Naive thymus-derived CD4-positive, alpha-beta T cell (primary cell): ENCODE measurements at regions of chr6 and their contacts with region 1.

Region 1: DNA sequence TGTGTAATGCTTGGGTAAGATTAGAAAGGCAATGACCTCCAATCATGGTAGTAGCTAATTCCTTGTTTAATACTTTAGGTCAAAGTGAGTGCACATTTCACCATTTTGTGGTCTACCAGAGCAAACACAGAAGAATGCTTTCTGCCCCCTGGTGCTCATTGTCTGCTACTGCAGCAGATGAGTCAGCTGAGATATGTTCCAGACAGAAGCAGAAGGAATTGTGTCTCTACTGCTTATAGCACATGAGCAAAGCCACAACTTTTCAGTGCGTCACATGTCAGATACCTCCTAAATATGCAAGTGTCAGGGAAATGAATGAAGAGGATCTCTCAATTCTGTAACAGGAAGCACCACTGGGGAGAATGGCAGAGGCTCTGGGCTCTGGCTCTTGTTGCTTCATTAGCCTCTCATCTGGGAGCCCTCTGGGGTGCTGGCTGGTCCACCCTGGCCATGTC is 308.9 kb downstream of the ALDH8A1 start:
- DNase-seq: peak; percentile 33 to 82 (median 74)
- ATAC-seq: peak; percentile 97
- H3K4me3 ChIP-seq: no peak overlapping the region
- H3K4me3 Mint-ChIP-seq: peak overlapping the region in 1 of 10 donors; percentile 12
- H3K27ac ChIP-seq: no peak overlapping the region
- H3K27ac Mint-ChIP-seq: peak overlapping the region in 4 of 9 donors; percentile 5 to 44 (median 29)
- H3K4me1 ChIP-seq: peaks cover 0 to 7% of the 10 kb centered on the region in 2 donors
- H3K4me1 Mint-ChIP-seq: peaks cover 1 to 34% (median 27%) of the 10 kb centered on the region in 7 donors
- H3K27me3 ChIP-seq: no peaks in the 10 kb centered on the region
- H3K27me3 Mint-ChIP-seq: peaks cover 0 to 3% (median 0%) of the 10 kb centered on the region in 5 donors

Region 2: DNA sequence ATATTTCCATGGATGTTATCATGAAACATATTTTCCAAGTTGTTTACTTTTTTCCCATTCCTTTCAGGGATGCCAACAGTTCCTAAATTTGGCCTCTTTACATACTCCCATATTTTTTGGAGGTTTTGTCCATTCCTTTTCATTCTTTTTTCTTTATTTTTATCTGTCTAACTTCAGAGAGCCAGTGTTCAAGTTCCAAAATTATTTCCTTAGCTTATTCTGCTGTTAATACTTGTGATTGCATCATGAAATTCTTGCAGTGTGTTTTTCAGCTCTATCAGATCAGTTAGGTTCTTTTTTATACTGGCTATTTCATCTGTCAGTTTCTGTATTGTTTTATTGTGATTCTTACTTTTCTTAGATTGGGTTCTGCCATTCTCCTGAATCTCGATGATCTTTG is 842.0 kb before region 1 on chr6:
- CTCF ChIA-PET with region 1: no interaction called
- POLR2A ChIA-PET with region 1: no interaction called
- intact Hi-C with region 1: no loop called
- DNase-seq: no peak
- ATAC-seq: no peak
- H3K4me3 ChIP-seq: no peak overlapping the region
- H3K4me3 Mint-ChIP-seq: no peak overlapping the region
- H3K27ac ChIP-seq: no peak overlapping the region
- H3K27ac Mint-ChIP-seq: no peak overlapping the region
- H3K4me1 ChIP-seq: no peaks in the 10 kb centered on the region
- H3K4me1 Mint-ChIP-seq: no peaks in the 10 kb centered on the region
- H3K27me3 ChIP-seq: no peaks in the 10 kb centered on the region
- H3K27me3 Mint-ChIP-seq: peaks cover 2 to 44% (median 18%) of the 10 kb centered on the region in 5 donors

Region 3: DNA sequence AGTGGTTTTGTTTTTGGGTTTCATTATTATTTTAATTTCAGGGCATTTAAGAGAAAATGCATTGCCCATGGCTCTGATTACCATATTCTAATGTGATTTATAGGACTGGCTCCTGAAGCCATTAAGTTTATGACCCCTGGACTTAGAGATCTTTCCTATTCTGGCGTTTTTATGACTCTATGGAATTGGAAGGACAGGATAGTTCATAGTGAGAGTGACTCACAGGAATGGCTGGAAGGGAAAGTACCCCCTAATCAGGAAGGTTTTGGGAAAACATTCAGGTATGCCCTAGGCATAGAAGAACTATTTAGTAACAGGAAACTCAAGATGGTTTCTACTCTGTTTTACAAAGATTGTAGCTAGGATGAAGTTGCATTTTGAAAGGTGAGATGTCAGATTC is 480.0 kb before region 1 on chr6:
- CTCF ChIA-PET with region 1: interaction called, 10 read pairs
- POLR2A ChIA-PET with region 1: no interaction called
- intact Hi-C with region 1: no loop called
- DNase-seq: no peak
- ATAC-seq: no peak
- H3K4me3 ChIP-seq: no peak overlapping the region
- H3K4me3 Mint-ChIP-seq: no peak overlapping the region
- H3K27ac ChIP-seq: no peak overlapping the region
- H3K27ac Mint-ChIP-seq: no peak overlapping the region
- H3K4me1 ChIP-seq: no peaks in the 10 kb centered on the region
- H3K4me1 Mint-ChIP-seq: no peaks in the 10 kb centered on the region
- H3K27me3 ChIP-seq: no peaks in the 10 kb centered on the region
- H3K27me3 Mint-ChIP-seq: peaks cover 0 to 3% (median 0%) of the 10 kb centered on the region in 5 donors

Region 4: DNA sequence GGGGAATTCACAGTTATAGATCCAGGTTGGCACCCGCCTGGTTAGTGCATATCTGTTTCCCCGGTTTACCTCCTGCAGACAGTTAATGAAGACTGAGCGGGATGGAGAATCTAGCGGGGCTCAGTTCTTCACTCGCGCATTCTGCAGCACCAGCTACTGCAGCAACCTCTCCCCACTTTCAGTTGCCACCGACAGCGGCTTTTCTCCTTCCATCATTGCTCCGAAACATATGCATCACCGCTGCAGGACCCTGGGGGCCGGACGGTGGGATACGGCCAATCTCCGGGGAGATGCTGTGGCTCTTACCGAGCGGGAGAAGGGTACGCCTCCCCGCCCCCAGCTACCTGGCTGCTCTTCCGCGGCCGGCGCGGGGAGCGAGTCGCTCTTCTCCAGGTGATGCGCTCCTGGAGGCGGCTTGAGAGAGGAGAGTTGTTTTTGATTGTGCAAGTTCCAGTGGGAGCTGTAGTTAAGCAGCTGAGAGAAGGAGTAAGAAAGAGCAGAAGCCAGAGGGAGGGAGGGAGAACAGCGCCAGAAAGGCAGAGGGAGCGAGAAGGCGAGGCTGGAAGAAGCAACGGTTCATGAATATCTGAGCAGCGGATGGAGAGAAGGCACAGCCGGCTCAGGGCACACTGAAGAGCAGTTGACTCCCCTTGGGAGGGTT is 323.4 kb before region 1 on chr6 and contains the start of gene SGK1:
- CTCF ChIA-PET with region 1: interaction called, 5 read pairs
- POLR2A ChIA-PET with region 1: no interaction called
- intact Hi-C with region 1: loop called (anchors 2 to 10 kb)
- DNase-seq: peak; percentile 6 to 40 (median 32)
- ATAC-seq: peak; percentile 77
- H3K4me3 ChIP-seq: peak within 1 kb of the TSS; percentile 68
- H3K4me3 Mint-ChIP-seq: peak within 1 kb of the TSS; percentile 85 to 99 (median 91)
- H3K27ac ChIP-seq: peak within 1 kb of the TSS; percentile 37
- H3K27ac Mint-ChIP-seq: peak within 1 kb of the TSS in 6 of 9 donors; percentile 50 to 84 (median 77)
- H3K4me1 ChIP-seq: peaks cover 0 to 6% of the 10 kb centered on the region in 2 donors
- H3K4me1 Mint-ChIP-seq: peaks cover 2 to 47% (median 29%) of the 10 kb centered on the region in 7 donors
- H3K27me3 ChIP-seq: no peaks in the 10 kb centered on the region
- H3K27me3 Mint-ChIP-seq: peaks cover 0 to 56% (median 21%) of the 10 kb centered on the region in 5 donors
- total RNA-seq, gene SGK1: 16.4 to 443 (median 32.4) TPM

Region 5: DNA sequence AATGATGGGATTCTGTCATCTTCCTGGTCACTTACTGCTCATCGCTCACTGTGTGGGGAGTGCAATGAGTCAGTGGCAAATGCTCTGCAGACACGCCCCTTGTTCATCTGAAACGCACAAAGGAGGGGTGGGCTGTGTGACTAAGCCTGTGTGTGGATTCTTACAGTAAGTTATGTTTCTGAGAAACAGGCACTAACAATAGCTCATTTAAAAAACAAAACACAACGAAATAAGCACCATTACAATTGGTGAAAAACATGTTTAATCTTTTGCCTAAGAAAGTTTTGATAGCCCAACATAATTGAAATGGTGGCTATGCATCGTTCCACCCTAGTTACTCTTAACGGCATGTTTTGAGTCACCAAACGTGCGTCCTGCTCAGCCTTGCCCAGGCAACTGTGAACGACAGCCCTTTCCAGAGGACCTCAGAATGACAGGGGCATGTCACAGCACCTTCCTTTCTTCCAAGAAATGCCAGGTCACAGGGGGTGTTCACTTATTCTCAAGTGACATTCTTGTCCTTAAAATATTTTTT is 204.7 kb before region 1 on chr6:
- CTCF ChIA-PET with region 1: no interaction called
- POLR2A ChIA-PET with region 1: no interaction called
- intact Hi-C with region 1: loop called in 1 of 2 experiments (anchors 5 kb)
- DNase-seq: peak in 1 of 9 donors; percentile 65
- ATAC-seq: peak; percentile 84
- H3K4me3 ChIP-seq: peak overlapping the region; percentile 14
- H3K4me3 Mint-ChIP-seq: peak overlapping the region in 2 of 10 donors; percentile 9 to 81
- H3K27ac ChIP-seq: no peak overlapping the region
- H3K27ac Mint-ChIP-seq: peak overlapping the region in 3 of 9 donors; percentile 6 to 94 (median 81)
- H3K4me1 ChIP-seq: no peaks in the 10 kb centered on the region
- H3K4me1 Mint-ChIP-seq: peaks cover 7 to 49% (median 21%) of the 10 kb centered on the region in 7 donors
- H3K27me3 ChIP-seq: no peaks in the 10 kb centered on the region
- H3K27me3 Mint-ChIP-seq: no peaks in the 10 kb centered on the region

Region 6: DNA sequence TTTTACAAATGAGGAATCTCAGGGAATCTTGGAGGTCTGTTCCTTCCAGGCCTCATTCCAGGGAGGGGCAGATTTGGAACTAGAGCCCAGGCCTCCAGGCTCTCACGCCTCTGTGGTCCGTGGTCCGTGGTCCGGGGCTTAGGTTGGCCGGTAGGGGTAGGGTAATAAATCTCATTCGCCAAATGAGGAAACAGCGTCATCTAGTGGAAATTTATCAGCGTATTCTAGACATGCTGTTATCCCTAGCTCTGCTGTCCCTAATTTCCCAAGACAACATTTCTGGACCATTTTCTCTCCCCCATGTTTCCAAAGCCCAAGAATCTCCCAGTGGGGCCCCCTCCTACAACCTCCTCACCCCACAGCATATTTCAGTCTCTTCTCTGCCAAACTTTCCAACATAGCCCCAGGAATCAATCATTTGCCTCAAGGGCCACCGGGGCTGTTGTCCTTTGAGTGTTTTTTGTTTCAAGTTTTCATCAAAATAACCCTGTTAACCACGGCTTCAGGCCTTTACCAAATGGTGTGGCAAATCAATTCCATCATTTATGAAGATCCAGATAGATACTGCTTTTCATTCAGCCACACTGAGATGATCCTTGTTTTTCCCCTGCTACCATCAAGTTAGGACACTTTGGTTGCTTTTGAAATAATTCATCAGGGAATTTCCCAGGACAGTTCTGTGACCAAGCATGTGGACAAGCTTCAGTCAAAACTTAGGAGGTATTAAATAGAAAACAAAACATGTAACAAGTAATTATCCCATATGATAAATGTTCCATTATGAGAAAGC is 182.1 kb after region 1 on chr6:
- CTCF ChIA-PET with region 1: interaction called, 6 read pairs
- POLR2A ChIA-PET with region 1: no interaction called
- intact Hi-C with region 1: loop called (anchors 1 kb)
- DNase-seq: peak in 7 of 9 donors; percentile 17 to 55 (median 43)
- ATAC-seq: peak; percentile 88
- H3K4me3 ChIP-seq: no peak overlapping the region
- H3K4me3 Mint-ChIP-seq: no peak overlapping the region
- H3K27ac ChIP-seq: no peak overlapping the region
- H3K27ac Mint-ChIP-seq: peak overlapping the region in 1 of 9 donors; percentile 5
- H3K4me1 ChIP-seq: peaks cover 0 to 4% of the 10 kb centered on the region in 2 donors
- H3K4me1 Mint-ChIP-seq: peaks cover 0 to 3% (median 0%) of the 10 kb centered on the region in 7 donors
- H3K27me3 ChIP-seq: no peaks in the 10 kb centered on the region
- H3K27me3 Mint-ChIP-seq: peaks cover 0 to 4% (median 0%) of the 10 kb centered on the region in 5 donors

Region 7: DNA sequence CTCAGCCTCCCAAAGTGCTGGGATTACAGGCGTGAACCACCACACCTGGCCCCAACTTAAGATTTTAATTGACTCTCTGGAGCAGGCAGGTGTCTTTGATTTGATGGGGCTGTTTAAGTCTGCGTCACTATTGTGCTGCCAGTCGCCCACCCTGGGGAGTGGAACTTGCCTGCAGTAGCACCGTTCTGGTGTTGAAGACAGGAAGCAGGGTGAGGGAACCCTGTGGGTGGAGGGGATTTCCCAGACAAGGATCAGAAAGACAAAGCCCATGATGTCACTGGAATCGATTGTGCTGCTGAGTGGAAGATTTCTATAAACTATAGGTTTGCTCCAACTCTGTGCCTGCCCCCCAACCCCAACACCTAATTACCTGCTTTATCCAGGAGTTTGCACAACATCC is 297.9 kb after region 1 on chr6:
- CTCF ChIA-PET with region 1: interaction called, 4 read pairs
- POLR2A ChIA-PET with region 1: no interaction called
- intact Hi-C with region 1: loop called (anchors 1 to 2 kb)
- DNase-seq: peak in 6 of 9 donors; percentile 27 to 84 (median 34)
- ATAC-seq: peak; percentile 91
- H3K4me3 ChIP-seq: no peak overlapping the region
- H3K4me3 Mint-ChIP-seq: peak overlapping the region in 2 of 10 donors; percentile 25 to 28
- H3K27ac ChIP-seq: no peak overlapping the region
- H3K27ac Mint-ChIP-seq: peak overlapping the region in 3 of 9 donors; percentile 36 to 83 (median 55)
- H3K4me1 ChIP-seq: peaks cover 0 to 6% of the 10 kb centered on the region in 2 donors
- H3K4me1 Mint-ChIP-seq: peaks cover 0 to 15% (median 10%) of the 10 kb centered on the region in 7 donors
- H3K27me3 ChIP-seq: no peaks in the 10 kb centered on the region
- H3K27me3 Mint-ChIP-seq: no peaks in the 10 kb centered on the region

Region 8: DNA sequence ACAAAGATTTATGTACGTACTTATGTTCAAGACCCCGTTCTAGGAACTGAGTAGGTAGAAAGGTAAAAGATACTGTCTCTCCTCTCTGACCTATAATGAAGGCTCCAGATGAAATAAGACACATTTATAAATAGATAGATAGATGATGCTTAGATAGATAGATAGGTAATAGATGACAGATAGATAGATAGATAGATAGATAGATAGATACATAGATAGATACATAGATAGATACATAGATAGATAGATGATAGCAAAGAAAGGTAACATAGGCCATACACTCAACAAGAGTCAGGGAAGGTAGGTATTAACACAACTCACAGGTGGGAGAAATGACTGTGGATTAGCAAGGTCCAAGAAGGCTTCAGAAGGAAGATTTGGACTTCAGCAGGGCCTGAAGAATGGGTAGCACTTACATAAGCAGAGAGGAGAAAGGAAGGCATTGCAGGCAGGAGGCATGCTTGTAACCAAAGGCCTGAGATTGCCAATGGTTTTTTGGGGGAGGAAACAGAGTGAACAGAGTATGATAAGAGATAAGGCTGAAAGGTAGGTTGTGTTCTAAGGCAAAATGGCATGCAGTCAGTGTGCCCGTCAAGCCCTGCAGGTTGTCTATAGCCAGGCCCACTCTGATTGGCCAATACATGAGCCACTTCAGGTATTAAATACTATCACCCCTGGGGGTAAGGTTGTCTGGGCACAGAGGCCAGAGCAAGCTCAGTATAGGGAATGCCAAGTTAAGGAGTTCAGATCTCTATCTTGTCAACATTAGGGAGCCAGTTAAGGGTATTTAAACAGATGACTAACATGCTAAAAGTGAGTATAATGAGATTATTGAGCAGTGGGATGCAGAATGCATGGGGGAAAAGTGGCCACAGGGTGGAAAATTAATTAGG is 532.5 kb after region 1 on chr6:
- CTCF ChIA-PET with region 1: no interaction called
- POLR2A ChIA-PET with region 1: no interaction called
- intact Hi-C with region 1: no loop called
- DNase-seq: no peak
- ATAC-seq: no peak
- H3K4me3 ChIP-seq: no peak overlapping the region
- H3K4me3 Mint-ChIP-seq: no peak overlapping the region
- H3K27ac ChIP-seq: no peak overlapping the region
- H3K27ac Mint-ChIP-seq: peak overlapping the region in 3 of 9 donors; percentile 3 to 50 (median 8)
- H3K4me1 ChIP-seq: peaks cover 0 to 4% of the 10 kb centered on the region in 2 donors
- H3K4me1 Mint-ChIP-seq: peaks cover 8 to 41% (median 14%) of the 10 kb centered on the region in 7 donors
- H3K27me3 ChIP-seq: no peaks in the 10 kb centered on the region
- H3K27me3 Mint-ChIP-seq: no peaks in the 10 kb centered on the region